Transverse colon (tissue), 4 donors: ENCODE measurements at regions of chr6 and their contacts with region 1.

Region 1: GRCh38 chr6:42436825-42437224 is 14.9 kb downstream of the TRERF1 start:
- DNase-seq: no peak
- H3K4me3 ChIP-seq: no peak overlapping the region
- H3K27ac ChIP-seq: no peak overlapping the region
- H3K4me1 ChIP-seq: peaks cover 9 to 29% (median 19%) of the 10 kb centered on the region in 4 donors
- H3K27me3 ChIP-seq: no peaks in the 10 kb centered on the region
- CTCF ChIP-seq: no peak
- EP300 ChIP-seq: no peak
- POLR2A ChIP-seq: no peak

Region 2: GRCh38 chr6:42467651-42468050 is 30.8 kb after region 1 on chr6:
- in situ Hi-C with region 1: no loop called
- intact Hi-C with region 1: loop called (anchors 2 kb)
- DNase-seq: no peak
- H3K4me3 ChIP-seq: no peak overlapping the region
- H3K27ac ChIP-seq: no peak overlapping the region
- H3K4me1 ChIP-seq: no peaks in the 10 kb centered on the region
- H3K27me3 ChIP-seq: no peaks in the 10 kb centered on the region
- CTCF ChIP-seq: no peak
- EP300 ChIP-seq: no peak
- POLR2A ChIP-seq: no peak

Region 3: DNA sequence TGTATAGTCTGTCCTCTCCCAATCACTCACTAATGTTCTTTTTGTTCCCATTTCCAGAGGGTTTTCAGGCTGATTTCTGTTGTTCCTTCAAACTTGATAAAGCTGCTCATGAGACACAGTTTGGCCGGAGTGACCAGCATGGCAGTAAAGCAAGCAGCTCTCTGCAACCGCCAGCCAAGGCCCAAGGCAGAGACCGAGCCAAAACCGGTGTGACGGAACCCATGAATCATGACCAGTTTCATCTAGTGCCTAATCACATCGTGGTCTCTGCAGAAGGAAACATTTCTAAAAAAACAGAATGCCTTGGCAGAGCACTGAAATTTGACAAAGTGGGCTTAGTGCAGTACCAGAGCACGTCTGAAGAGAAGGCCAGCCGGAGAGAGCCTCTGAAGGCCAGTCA is 427.8 kb after region 1 on chr6:
- in situ Hi-C with region 1: no loop called
- intact Hi-C with region 1: no loop called
- DNase-seq: no peak
- H3K4me3 ChIP-seq: no peak overlapping the region
- H3K27ac ChIP-seq: no peak overlapping the region
- H3K4me1 ChIP-seq: no peaks in the 10 kb centered on the region
- H3K27me3 ChIP-seq: no peaks in the 10 kb centered on the region
- CTCF ChIP-seq: no peak
- EP300 ChIP-seq: no peak
- POLR2A ChIP-seq: no peak

Region 4: GRCh38 chr6:43113431-43114260 is 676.8 kb after region 1 on chr6:
- in situ Hi-C with region 1: no loop called
- intact Hi-C with region 1: no loop called
- DNase-seq: peak; percentile 28
- H3K4me3 ChIP-seq: no peak overlapping the region
- H3K27ac ChIP-seq: peak overlapping the region; percentile 56 to 77 (median 70)
- H3K4me1 ChIP-seq: peaks cover 5 to 21% (median 12%) of the 10 kb centered on the region in 4 donors
- H3K27me3 ChIP-seq: no peaks in the 10 kb centered on the region
- CTCF ChIP-seq: no peak
- EP300 ChIP-seq: no peak
- POLR2A ChIP-seq: no peak